Motor neuron (in vitro differentiated cells): ENCODE measurements at regions of chr12 and their contacts with region 1.

Region 1: DNA sequence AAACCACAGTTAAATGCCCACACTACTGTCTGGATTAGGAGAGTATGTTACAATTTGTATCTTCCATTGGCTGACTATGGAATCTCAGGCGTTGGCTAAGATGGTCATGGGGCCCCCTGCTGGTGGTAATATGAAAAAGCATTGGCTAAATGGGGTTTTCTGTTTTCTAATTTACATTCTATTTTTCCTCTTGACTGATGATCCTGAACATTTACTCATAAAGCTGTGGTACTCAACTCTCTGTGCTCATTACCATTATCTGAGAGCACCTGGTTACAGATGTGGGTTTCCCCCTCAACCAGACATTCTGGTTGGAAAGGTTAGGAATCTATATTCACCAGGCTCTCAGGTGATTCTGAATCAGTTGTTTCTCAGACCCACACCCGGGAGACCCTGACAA is 64.8 kb downstream of the WSCD2 start:
- ATAC-seq: peak in 3 of 8 experiments; percentile 21 to 31 (median 28)
- H3K4me3 ChIP-seq: no peak overlapping the region
- H3K27ac ChIP-seq: no peak overlapping the region
- H3K4me1 ChIP-seq: peaks cover 0 to 6% of the 10 kb centered on the region in 2 donors

Region 2: DNA sequence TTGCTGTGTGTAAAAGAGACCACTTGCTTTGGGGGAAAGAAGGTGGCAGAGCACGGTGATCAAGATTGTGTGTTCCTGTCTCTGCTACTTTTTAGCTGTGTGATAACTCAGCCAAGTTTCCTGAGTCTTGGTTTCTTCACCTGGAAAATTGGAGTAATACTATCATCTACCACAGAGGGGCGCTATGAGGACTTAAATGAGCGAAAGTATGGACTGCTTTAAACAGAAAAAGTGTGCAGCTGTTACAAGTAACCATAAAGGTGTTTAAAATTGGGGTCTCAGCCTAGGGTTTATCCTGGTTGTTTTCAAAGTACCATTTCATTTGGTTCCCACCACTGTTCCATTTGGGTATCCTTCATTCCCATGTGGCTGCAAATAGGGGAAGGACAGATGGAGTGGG is 130.7 kb before region 1 on chr12:
- in situ Hi-C with region 1: loop called in 1 of 9 experiments (anchors 10 kb)
- ATAC-seq: peak in 2 of 8 experiments; percentile 36 to 39
- H3K4me3 ChIP-seq: no peak overlapping the region
- H3K27ac ChIP-seq: no peak overlapping the region
- H3K4me1 ChIP-seq: peaks cover 10 to 18% of the 10 kb centered on the region in 2 donors

Region 3: DNA sequence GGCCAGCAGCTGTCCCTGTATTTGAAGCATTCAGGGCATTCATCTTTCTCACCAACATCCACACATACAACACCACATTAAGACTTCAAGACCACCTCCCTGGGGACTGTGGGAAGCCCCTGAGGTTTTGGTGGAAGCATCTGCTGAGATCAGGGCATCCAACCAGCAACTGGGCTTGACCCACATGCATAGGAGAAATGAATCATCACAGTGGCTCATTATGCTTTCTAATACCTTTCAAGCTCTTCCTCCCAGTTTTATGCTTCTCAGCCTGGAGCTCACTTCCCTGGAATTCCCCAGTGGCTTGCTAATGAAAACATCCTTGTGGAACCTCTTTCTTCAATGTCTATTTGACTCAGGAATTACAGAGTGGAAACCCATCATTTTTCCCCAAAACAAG is 166.6 kb after region 1 on chr12:
- in situ Hi-C with region 1: no loop called
- ATAC-seq: peak in 5 of 8 experiments; percentile 61 to 97 (median 68)
- H3K4me3 ChIP-seq: no peak overlapping the region
- H3K27ac ChIP-seq: peak overlapping the region in 1 of 2 donors; percentile 24
- H3K4me1 ChIP-seq: peaks cover 14 to 27% of the 10 kb centered on the region in 2 donors